ENCODE measurements at regions of chr14 and their contacts with region 1.

Region 1: DNA sequence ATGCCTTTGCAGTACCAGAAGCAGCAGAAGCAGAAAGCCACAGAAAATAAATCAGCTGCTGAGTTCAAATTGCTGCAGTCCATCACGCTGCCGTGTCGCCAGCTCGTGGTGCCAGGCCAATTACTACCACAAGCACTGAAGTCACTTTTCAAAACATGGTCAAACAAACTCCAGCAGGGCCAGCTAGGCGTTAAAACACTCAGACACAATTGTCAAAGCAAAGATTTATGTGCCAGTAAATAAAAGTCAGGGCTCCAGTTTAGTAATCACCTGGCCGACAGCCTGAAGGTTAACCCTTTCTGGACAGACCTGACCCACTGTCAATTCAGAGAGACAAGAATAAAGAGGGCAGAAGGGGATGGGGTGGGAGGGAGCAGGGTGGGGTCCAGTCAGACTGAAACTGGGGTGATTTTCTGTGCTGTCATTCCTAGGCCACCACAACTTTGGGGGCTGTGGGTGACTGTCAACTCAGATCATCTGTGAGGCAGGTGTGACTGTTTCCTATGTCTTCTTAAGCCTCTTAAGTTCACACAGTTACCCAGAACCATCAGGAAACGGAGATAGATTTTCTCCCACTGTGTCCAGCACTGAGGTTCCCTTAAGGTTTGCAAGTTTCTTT is 109.8 kb upstream of the FUT8 start:
- DNase-seq: peak; percentile 44
- ATAC-seq: peak; percentile 8
- H3K4me3 ChIP-seq: no peak overlapping the region
- H3K4me3 Mint-ChIP-seq: peak overlapping the region; percentile 56
- H3K27ac ChIP-seq: peak overlapping the region; percentile 71 to 80
- H3K27ac Mint-ChIP-seq: peak overlapping the region; percentile 98
- H3K4me1 ChIP-seq: peaks cover 54 to 87% of the 10 kb centered on the region in 2 donors
- H3K4me1 Mint-ChIP-seq: peaks cover 75% of the 10 kb centered on the region
- H3K27me3 ChIP-seq: no peaks in the 10 kb centered on the region
- H3K27me3 Mint-ChIP-seq: no peaks in the 10 kb centered on the region
- CTCF ChIP-seq: no peak

Region 2: DNA sequence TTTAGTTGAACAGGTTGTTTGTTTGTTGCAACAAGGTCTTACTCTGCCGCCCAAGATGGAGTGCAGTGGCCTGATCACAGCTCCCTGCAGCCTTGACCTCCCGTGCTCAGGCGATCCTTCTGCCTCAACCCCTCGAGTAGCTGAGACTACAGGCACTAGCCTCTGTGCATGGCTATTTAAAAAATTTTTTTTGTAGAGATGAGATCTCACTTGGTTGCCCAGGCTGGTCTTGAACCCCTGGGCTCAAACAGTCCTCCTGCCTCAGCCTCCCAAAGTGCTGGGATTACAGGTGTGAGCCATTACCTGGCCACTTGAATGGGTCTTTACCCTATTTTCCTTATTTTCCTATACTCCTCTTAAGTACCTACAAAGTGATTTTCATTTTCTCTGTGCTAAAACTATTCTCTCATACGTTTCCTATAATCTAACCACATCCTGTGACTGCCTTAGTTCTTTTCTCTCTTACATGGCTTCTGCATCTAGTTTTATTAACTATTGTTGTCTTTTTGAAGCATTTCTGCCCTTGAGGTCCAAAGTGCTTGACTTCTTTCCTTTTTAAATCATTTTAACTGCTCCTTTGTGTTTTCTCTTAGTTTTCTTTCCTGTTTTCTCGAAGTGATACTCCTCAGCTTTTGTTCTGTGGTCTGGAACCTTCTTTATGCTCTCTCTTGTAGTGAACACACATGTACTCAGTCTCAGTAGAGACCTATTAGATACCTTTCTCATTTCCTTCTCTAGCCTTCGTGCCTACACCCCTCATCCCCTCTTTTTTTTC is 374.3 kb before region 1 on chr14:
- CTCF ChIA-PET with region 1: no interaction called
- POLR2A ChIA-PET with region 1: no interaction called
- intact Hi-C with region 1: no loop called
- DNase-seq: no peak
- ATAC-seq: no peak
- H3K4me3 ChIP-seq: peak overlapping the region in 1 of 5 experiments; percentile 4
- H3K4me3 Mint-ChIP-seq: no peak overlapping the region
- H3K27ac ChIP-seq: peak overlapping the region; percentile 19 to 51
- H3K27ac Mint-ChIP-seq: no peak overlapping the region
- H3K4me1 ChIP-seq: peaks cover 15 to 19% of the 10 kb centered on the region in 2 donors
- H3K4me1 Mint-ChIP-seq: peaks cover 13% of the 10 kb centered on the region
- H3K27me3 ChIP-seq: no peaks in the 10 kb centered on the region
- H3K27me3 Mint-ChIP-seq: no peaks in the 10 kb centered on the region
- CTCF ChIP-seq: no peak

Region 3: GRCh38 chr14:65336191-65336591 is 33.5 kb after region 1 on chr14:
- CTCF ChIA-PET with region 1: no interaction called
- POLR2A ChIA-PET with region 1: interaction called, 5 read pairs
- intact Hi-C with region 1: loop called (anchors 5 kb)
- DNase-seq: no peak
- ATAC-seq: peak; percentile 37
- H3K4me3 ChIP-seq: no peak overlapping the region
- H3K4me3 Mint-ChIP-seq: peak overlapping the region; percentile 7
- H3K27ac ChIP-seq: no peak overlapping the region
- H3K27ac Mint-ChIP-seq: peak overlapping the region; percentile 72
- H3K4me1 ChIP-seq: peaks cover 39 to 57% of the 10 kb centered on the region in 2 donors
- H3K4me1 Mint-ChIP-seq: peaks cover 52% of the 10 kb centered on the region
- H3K27me3 ChIP-seq: no peaks in the 10 kb centered on the region
- H3K27me3 Mint-ChIP-seq: no peaks in the 10 kb centered on the region
- CTCF ChIP-seq: no peak

Measured in B cell (primary cell).